CD8-positive, alpha-beta T cell (primary cell): ENCODE measurements at regions of chr16 and their contacts with region 1.

Region 1: DNA sequence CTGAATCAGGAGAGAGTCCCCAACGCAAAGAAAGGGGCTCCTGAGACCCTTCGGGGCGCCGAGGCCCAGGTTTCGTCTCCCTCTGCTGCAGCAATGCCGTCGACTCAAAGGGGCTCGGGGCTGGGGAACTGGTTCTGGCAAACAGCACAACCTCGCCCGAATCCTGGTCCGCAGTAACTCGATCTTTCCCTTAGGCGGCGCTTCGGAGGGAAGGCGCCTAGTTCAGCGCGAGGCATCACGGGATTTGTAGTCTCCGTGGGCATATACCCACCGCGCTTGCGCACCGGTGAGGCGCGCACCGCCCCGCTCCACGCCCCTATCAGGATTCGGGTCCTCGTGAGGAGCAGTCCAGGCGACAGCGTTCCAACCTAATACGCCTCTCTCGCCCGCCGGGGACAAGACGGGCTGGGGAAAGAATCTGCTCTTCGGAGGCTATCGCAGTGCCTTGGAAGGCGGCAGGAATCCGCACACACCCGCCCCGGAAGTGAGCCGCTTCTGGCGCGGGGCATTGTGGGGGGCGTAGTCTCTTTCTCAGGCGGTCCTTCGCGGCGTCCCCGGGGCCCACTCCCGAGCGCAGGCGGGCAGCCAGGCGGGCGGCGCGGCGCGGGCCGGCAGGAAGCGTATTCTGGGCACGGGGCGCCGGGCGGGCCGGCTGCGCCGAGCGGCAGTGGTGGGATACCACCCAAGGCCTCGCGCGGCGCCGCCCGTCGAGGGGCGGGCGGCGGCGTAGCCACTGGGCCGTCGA is at the start of gene THAP11:
- DNase-seq: peak; percentile 91 to 97 (median 94)
- ATAC-seq: peak; percentile 62
- H3K4me3 ChIP-seq: peak within 1 kb of the TSS; percentile 97 to 100
- H3K4me3 Mint-ChIP-seq: peak within 1 kb of the TSS; percentile 95
- H3K27ac ChIP-seq: peak within 1 kb of the TSS; percentile 53 to 99
- H3K27ac Mint-ChIP-seq: peak within 1 kb of the TSS; percentile 96
- H3K4me1 ChIP-seq: peaks cover 39% of the 10 kb centered on the region
- H3K4me1 Mint-ChIP-seq: peaks cover 41% of the 10 kb centered on the region
- H3K27me3 ChIP-seq: no peaks in the 10 kb centered on the region
- H3K27me3 Mint-ChIP-seq: no peaks in the 10 kb centered on the region
- CTCF ChIP-seq: peak; percentile 79
- total RNA-seq, gene THAP11: 25.1 to 26.0 TPM

Region 2: GRCh38 chr16:67226804-67227557 is 615.0 kb before region 1 on chr16 and contains the start of gene TMEM208:
- CTCF ChIA-PET with region 1: no interaction called
- POLR2A ChIA-PET with region 1: no interaction called
- intact Hi-C with region 1: loop called in 1 of 2 experiments (anchors 10 kb)
- DNase-seq: peak; percentile 95 to 99 (median 98)
- ATAC-seq: peak; percentile 98
- H3K4me3 ChIP-seq: peak within 1 kb of the TSS; percentile 95 to 100
- H3K4me3 Mint-ChIP-seq: peak within 1 kb of the TSS; percentile 100
- H3K27ac ChIP-seq: peak within 1 kb of the TSS; percentile 83 to 93
- H3K27ac Mint-ChIP-seq: peak within 1 kb of the TSS; percentile 98
- H3K4me1 ChIP-seq: peaks cover 26% of the 10 kb centered on the region
- H3K4me1 Mint-ChIP-seq: peaks cover 47% of the 10 kb centered on the region
- H3K27me3 ChIP-seq: no peaks in the 10 kb centered on the region
- H3K27me3 Mint-ChIP-seq: no peaks in the 10 kb centered on the region
- CTCF ChIP-seq: no peak
- total RNA-seq, gene TMEM208: 37.1 to 44.7 TPM

Region 3: GRCh38 chr16:67561824-67562525 is 280.0 kb before region 1 on chr16:
- CTCF ChIA-PET with region 1: no interaction called
- POLR2A ChIA-PET with region 1: interaction called, 4 read pairs
- intact Hi-C with region 1: loop called in 1 of 2 experiments (anchors 10 kb)
- DNase-seq: peak; percentile 93 to 99 (median 96)
- ATAC-seq: peak; percentile 77
- H3K4me3 ChIP-seq: peak overlapping the region; percentile 65 to 73
- H3K4me3 Mint-ChIP-seq: peak overlapping the region; percentile 82
- H3K27ac ChIP-seq: peak overlapping the region; percentile 71 to 90
- H3K27ac Mint-ChIP-seq: peak overlapping the region; percentile 96
- H3K4me1 ChIP-seq: peaks cover 35% of the 10 kb centered on the region
- H3K4me1 Mint-ChIP-seq: peaks cover 53% of the 10 kb centered on the region
- H3K27me3 ChIP-seq: no peaks in the 10 kb centered on the region
- H3K27me3 Mint-ChIP-seq: no peaks in the 10 kb centered on the region
- CTCF ChIP-seq: no peak

Region 4: GRCh38 chr16:67816240-67817031 is 25.5 kb before region 1 on chr16:
- CTCF ChIA-PET with region 1: interaction called, 17 read pairs
- POLR2A ChIA-PET with region 1: interaction called, 5 read pairs
- intact Hi-C with region 1: loop called in 1 of 2 experiments (anchors 1 kb)
- DNase-seq: peak; percentile 79 to 96 (median 90)
- ATAC-seq: peak; percentile 99
- H3K4me3 ChIP-seq: no peak overlapping the region
- H3K4me3 Mint-ChIP-seq: peak overlapping the region; percentile 66
- H3K27ac ChIP-seq: no peak overlapping the region
- H3K27ac Mint-ChIP-seq: no peak overlapping the region
- H3K4me1 ChIP-seq: peaks cover 4% of the 10 kb centered on the region
- H3K4me1 Mint-ChIP-seq: peaks cover 5% of the 10 kb centered on the region
- H3K27me3 ChIP-seq: no peaks in the 10 kb centered on the region
- H3K27me3 Mint-ChIP-seq: no peaks in the 10 kb centered on the region
- CTCF ChIP-seq: peak; percentile 100

Region 5: GRCh38 chr16:67892899-67893742 is 51.2 kb after region 1 on chr16 and contains the start of gene PSKH1:
- CTCF ChIA-PET with region 1: no interaction called
- POLR2A ChIA-PET with region 1: interaction called, 6 read pairs
- intact Hi-C with region 1: loop called (anchors 1 kb)
- DNase-seq: peak; percentile 89 to 96 (median 93)
- ATAC-seq: peak; percentile 99
- H3K4me3 ChIP-seq: peak within 1 kb of the TSS; percentile 81 to 93
- H3K4me3 Mint-ChIP-seq: peak within 1 kb of the TSS; percentile 95
- H3K27ac ChIP-seq: peak within 1 kb of the TSS; percentile 90 to 93
- H3K27ac Mint-ChIP-seq: peak within 1 kb of the TSS; percentile 96
- H3K4me1 ChIP-seq: peaks cover 24% of the 10 kb centered on the region
- H3K4me1 Mint-ChIP-seq: peaks cover 40% of the 10 kb centered on the region
- H3K27me3 ChIP-seq: no peaks in the 10 kb centered on the region
- H3K27me3 Mint-ChIP-seq: no peaks in the 10 kb centered on the region
- CTCF ChIP-seq: no peak
- total RNA-seq, gene PSKH1: 13.3 to 13.4 TPM

Region 6: GRCh38 chr16:68179196-68179795 is 337.4 kb after region 1 on chr16:
- CTCF ChIA-PET with region 1: no interaction called
- POLR2A ChIA-PET with region 1: no interaction called
- intact Hi-C with region 1: no loop called
- DNase-seq: no peak
- ATAC-seq: no peak
- H3K4me3 ChIP-seq: no peak overlapping the region
- H3K4me3 Mint-ChIP-seq: no peak overlapping the region
- H3K27ac ChIP-seq: no peak overlapping the region
- H3K27ac Mint-ChIP-seq: peak overlapping the region; percentile 73
- H3K4me1 ChIP-seq: no peaks in the 10 kb centered on the region
- H3K4me1 Mint-ChIP-seq: peaks cover 11% of the 10 kb centered on the region
- H3K27me3 ChIP-seq: no peaks in the 10 kb centered on the region
- H3K27me3 Mint-ChIP-seq: no peaks in the 10 kb centered on the region
- CTCF ChIP-seq: no peak

Region 7: GRCh38 chr16:68244903-68245853 is 403.2 kb after region 1 on chr16 and contains the start of gene PLA2G15:
- CTCF ChIA-PET with region 1: no interaction called
- POLR2A ChIA-PET with region 1: no interaction called
- intact Hi-C with region 1: loop called in 1 of 2 experiments (anchors 10 kb)
- DNase-seq: peak; percentile 94 to 98 (median 96)
- ATAC-seq: peak; percentile 99
- H3K4me3 ChIP-seq: peak within 1 kb of the TSS; percentile 88 to 91
- H3K4me3 Mint-ChIP-seq: peak within 1 kb of the TSS; percentile 98
- H3K27ac ChIP-seq: peak within 1 kb of the TSS in 1 of 2 experiments; percentile 38
- H3K27ac Mint-ChIP-seq: peak within 1 kb of the TSS; percentile 79
- H3K4me1 ChIP-seq: peaks cover 21% of the 10 kb centered on the region
- H3K4me1 Mint-ChIP-seq: peaks cover 26% of the 10 kb centered on the region
- H3K27me3 ChIP-seq: no peaks in the 10 kb centered on the region
- H3K27me3 Mint-ChIP-seq: no peaks in the 10 kb centered on the region
- CTCF ChIP-seq: no peak
- total RNA-seq, gene PLA2G15: 5.1 to 6.0 TPM